ENCODE measurements at regions of chr3 and their contacts with region 1.

Region 1: GRCh38 chr3:132352541-132353143 is 35.4 kb downstream of the ACP3 start:
- DNase-seq: peak; percentile 71
- H3K4me3 ChIP-seq: no peak overlapping the region
- H3K27ac ChIP-seq: no peak overlapping the region
- H3K4me1 ChIP-seq: no peaks in the 10 kb centered on the region
- CTCF ChIP-seq: peak; percentile 97

Region 2: DNA sequence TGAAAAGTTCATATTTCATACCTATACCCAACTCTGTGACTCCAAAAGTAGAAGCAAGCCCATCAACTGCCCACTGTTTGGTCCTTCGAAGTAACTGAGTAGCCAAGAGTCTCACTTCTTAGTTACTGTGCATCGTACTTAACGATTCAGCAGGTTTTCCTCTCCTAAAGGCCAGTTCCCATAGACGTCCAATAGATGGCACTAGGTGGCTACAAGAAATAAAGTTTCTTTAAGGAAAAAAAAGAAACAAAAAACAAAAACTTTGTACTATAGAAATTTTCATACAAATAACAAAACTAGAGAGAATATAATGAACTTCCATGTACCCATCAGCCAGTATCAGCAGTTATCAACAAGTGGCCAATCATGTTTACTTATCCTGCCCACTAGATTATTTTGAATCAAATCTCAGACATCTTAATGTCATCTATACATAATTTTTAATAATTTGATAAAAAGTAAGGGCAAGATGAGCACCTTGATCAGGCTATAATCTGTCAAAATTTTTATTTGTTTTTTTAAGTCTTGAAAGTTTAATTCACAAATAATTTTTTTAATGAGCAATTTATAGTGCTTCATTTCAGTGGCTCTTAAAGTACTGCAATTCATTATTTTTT is 99.3 kb before region 1 on chr3:
- CTCF ChIA-PET with region 1: no interaction called
- POLR2A ChIA-PET with region 1: no interaction called
- intact Hi-C with region 1: no loop called
- DNase-seq: peak; percentile 65
- H3K4me3 ChIP-seq: no peak overlapping the region
- H3K27ac ChIP-seq: no peak overlapping the region
- H3K4me1 ChIP-seq: no peaks in the 10 kb centered on the region
- CTCF ChIP-seq: peak; percentile 89

Region 3: GRCh38 chr3:132399054-132399929 is 46.6 kb after region 1 on chr3:
- CTCF ChIA-PET with region 1: no interaction called
- POLR2A ChIA-PET with region 1: interaction called, 3 read pairs
- intact Hi-C with region 1: loop called (anchors 1 kb)
- DNase-seq: peak; percentile 65
- H3K4me3 ChIP-seq: no peak overlapping the region
- H3K27ac ChIP-seq: no peak overlapping the region
- H3K4me1 ChIP-seq: no peaks in the 10 kb centered on the region
- CTCF ChIP-seq: peak; percentile 98

Region 4: GRCh38 chr3:132486086-132486485 is 133.4 kb after region 1 on chr3:
- CTCF ChIA-PET with region 1: no interaction called
- POLR2A ChIA-PET with region 1: interaction called, 6 read pairs
- intact Hi-C with region 1: loop called (anchors 10 kb)
- DNase-seq: no peak
- H3K4me3 ChIP-seq: no peak overlapping the region
- H3K27ac ChIP-seq: no peak overlapping the region
- H3K4me1 ChIP-seq: no peaks in the 10 kb centered on the region
- CTCF ChIP-seq: no peak

Region 5: DNA sequence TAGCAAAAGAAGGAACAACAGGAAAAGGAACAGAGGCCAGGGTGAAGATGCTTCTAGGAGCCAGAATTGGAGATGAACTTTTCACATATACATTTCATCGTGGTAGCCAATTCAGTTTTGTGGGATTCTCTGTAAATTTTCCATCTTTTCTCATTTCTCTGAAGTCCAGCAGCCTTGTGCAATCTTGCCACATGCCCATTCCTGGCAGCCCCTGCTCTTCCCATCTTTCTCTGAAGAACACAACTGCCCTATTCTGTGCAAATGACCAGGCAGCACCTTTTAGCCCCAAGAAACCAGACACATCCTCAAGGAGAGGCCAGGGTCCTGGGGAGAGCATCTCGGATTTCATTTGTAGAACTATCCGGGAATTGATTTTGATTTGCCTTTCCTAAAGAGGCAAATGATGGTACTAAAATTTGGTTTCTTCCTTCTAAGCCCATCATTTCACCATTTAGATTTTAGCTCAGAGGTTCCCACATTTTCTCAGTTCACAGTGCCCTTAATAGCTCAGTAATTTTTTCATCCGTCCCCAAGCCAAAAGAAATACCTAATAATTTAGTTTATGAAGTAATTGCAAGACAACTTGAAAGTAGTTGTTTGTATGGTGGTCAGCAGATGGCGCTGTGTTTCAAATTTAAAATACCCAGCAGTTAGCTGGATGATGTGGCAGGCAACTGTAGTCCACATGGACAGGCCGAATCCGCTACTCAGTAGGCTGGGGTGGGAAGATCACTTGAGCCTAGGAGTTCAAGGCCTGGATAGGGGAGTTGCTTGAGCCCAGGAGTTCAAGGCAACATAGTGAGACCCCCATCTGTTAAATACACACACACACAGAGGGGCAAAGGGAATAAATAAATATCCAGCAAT is 183.2 kb after region 1 on chr3:
- CTCF ChIA-PET with region 1: no interaction called
- POLR2A ChIA-PET with region 1: no interaction called
- intact Hi-C with region 1: loop called (anchors 10 kb)
- DNase-seq: peak; percentile 75
- H3K4me3 ChIP-seq: no peak overlapping the region
- H3K27ac ChIP-seq: no peak overlapping the region
- H3K4me1 ChIP-seq: no peaks in the 10 kb centered on the region
- CTCF ChIP-seq: peak; percentile 91

Region 6: DNA sequence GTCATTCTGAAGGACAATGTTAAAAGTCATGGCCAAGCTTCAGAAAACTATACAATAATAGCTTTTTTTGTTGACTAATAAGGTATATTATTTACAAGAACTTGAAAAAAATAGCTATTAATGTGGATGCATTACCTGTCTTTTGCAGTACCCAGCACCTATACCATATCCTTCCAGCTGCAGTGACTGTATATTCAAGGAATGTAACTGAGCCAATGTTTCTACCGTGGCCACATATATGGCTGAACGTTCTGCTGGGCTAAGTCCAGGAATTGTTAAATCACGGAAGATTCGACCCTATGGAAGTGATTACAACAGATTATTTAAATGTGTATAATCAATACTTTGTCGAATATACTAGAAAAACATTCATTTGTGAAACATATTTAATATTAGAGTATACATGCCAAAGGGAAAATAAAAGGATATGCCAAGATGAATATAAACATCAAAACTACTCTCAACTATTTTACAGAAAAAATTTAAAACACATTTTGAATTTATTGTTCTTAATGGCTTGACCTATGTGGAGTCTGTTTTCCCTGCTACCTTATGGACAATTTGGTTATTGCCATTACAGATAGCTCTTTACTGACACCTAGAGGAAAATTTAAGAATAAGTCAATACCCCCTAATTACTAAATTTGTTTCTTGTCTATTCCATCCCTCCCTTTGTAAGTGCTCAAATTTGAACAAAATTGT is 289.3 kb after region 1 on chr3:
- CTCF ChIA-PET with region 1: interaction called, 3 read pairs
- POLR2A ChIA-PET with region 1: no interaction called
- intact Hi-C with region 1: loop called (anchors 10 kb)
- DNase-seq: peak; percentile 53
- H3K4me3 ChIP-seq: no peak overlapping the region
- H3K27ac ChIP-seq: no peak overlapping the region
- H3K4me1 ChIP-seq: no peaks in the 10 kb centered on the region
- CTCF ChIP-seq: peak; percentile 90

Measured in OCI-LY7 (cell line).